WTC11 (cell line): ENCODE measurements at regions of chr1 and their contacts with region 1.

Region 1: GRCh38 chr1:115337633-115338456 is at the start of gene NGF:
- DNase-seq: peak; percentile 73
- ATAC-seq: peak; percentile 90
- H3K4me3 Mint-ChIP-seq: peak within 1 kb of the TSS; percentile 87
- H3K27ac Mint-ChIP-seq: no peak within 1 kb of the TSS
- H3K4me1 Mint-ChIP-seq: peaks cover 20% of the 10 kb centered on the region
- H3K27me3 Mint-ChIP-seq: peaks cover 80% of the 10 kb centered on the region
- CTCF ChIP-seq: no peak
- total RNA-seq, gene NGF: 0.25 to 0.55 TPM (median 0.53 TPM) in 3 replicates

Region 2: DNA sequence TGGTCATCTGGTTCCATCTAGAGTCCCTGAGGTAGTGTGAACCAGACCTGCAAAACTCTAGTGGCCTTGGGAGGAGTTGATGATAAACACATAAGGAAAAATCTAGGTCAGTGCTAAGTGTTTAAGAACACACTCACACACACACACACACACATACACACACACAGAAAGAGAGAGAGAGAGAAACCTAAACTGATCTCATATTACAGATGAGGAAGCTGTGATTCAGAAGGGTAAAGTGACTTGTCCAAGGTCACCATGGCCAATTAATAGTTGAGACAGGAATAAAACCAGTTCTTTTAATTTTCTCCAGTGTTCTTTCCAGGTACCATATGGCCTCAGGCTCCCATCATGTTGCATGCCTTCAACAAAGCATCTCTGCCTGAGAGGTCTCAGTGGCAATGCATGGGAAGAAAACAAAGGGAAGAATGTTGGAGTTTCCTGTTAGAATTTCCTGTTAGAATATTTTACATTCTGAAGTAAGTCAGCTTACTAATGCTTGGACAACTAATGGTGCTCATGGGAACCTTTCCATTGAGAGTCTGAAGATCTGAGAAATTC is 171.2 kb before region 1 on chr1:
- CTCF ChIA-PET with region 1: no interaction called
- POLR2A ChIA-PET with region 1: no interaction called
- DNase-seq: no peak
- ATAC-seq: no peak; the same call in 1 of the 2 replicates
- H3K4me3 Mint-ChIP-seq: no peak overlapping the region
- H3K27ac Mint-ChIP-seq: no peak overlapping the region
- H3K4me1 Mint-ChIP-seq: peaks cover 6% of the 10 kb centered on the region
- H3K27me3 Mint-ChIP-seq: no peaks in the 10 kb centered on the region; the same call in 1 of the 2 replicates
- CTCF ChIP-seq: no peak

Region 3: DNA sequence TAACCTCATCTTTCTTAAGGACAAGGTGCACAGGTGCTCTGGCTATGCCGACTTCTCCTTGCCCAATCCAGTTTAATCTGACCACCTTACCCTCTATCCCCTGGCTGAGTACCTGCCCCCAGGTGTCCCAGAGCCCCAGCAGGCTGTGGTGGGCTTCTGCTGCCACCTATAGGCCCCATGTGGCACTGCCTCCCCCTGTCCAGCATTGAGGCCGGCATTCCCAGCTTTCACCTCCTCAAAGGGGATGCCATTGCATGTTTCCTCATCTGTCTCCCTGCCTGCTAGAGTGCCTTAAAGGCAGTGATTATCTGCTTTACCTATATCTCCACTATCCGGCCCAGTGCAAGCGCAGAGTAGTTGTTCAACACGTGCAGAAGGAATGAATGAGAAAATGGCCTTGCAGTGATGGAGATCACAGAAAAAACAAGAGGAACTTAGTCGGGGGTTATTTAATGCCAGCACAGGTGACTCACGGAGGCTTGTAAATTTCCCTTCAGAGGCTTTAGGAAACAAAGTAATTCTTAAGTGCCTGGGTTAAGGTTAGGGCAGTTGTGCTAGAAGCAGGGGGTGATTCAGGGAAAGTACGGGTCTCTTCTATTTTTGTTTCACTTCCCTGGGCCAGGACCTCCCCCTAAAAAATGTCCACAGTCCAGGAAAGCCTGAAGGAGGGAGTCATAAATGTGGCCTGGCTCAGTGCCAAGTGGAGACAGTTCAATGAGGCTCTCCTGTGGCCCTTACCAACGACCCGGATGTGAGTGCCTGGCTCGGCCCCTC is 132.0 kb after region 1 on chr1:
- CTCF ChIA-PET with region 1: interaction called, 23 read pairs
- POLR2A ChIA-PET with region 1: no interaction called
- DNase-seq: peak; percentile 88
- ATAC-seq: peak; percentile 96
- H3K4me3 Mint-ChIP-seq: no peak overlapping the region
- H3K27ac Mint-ChIP-seq: no peak overlapping the region; the same call in 1 of the 2 replicates
- H3K4me1 Mint-ChIP-seq: peaks cover 3% of the 10 kb centered on the region; the same call in 1 of the 2 replicates
- H3K27me3 Mint-ChIP-seq: no peaks in the 10 kb centered on the region
- CTCF ChIP-seq: peak; percentile 85